Naive thymus-derived CD4-positive, alpha-beta T cell (primary cell): ENCODE measurements at regions of chr11 and their contacts with region 1.

Region 1: GRCh38 chr11:67583247-67584204 is at the start of gene GSTP1:
- DNase-seq: peak; percentile 51 to 86 (median 62)
- ATAC-seq: peak; percentile 86
- H3K4me3 ChIP-seq: peak within 1 kb of the TSS; percentile 69
- H3K4me3 Mint-ChIP-seq: peak within 1 kb of the TSS; percentile 79 to 98 (median 92)
- H3K27ac ChIP-seq: peak within 1 kb of the TSS; percentile 77
- H3K27ac Mint-ChIP-seq: peak within 1 kb of the TSS; percentile 78 to 93 (median 90)
- H3K4me1 ChIP-seq: peaks cover 9 to 18% of the 10 kb centered on the region in 2 donors
- H3K4me1 Mint-ChIP-seq: peaks cover 37 to 55% (median 44%) of the 10 kb centered on the region in 7 donors
- H3K27me3 ChIP-seq: no peaks in the 10 kb centered on the region
- H3K27me3 Mint-ChIP-seq: peaks cover 0 to 27% (median 0%) of the 10 kb centered on the region in 5 donors
- total RNA-seq, gene GSTP1: 77.2 to 265 (median 139) TPM

Region 2: DNA sequence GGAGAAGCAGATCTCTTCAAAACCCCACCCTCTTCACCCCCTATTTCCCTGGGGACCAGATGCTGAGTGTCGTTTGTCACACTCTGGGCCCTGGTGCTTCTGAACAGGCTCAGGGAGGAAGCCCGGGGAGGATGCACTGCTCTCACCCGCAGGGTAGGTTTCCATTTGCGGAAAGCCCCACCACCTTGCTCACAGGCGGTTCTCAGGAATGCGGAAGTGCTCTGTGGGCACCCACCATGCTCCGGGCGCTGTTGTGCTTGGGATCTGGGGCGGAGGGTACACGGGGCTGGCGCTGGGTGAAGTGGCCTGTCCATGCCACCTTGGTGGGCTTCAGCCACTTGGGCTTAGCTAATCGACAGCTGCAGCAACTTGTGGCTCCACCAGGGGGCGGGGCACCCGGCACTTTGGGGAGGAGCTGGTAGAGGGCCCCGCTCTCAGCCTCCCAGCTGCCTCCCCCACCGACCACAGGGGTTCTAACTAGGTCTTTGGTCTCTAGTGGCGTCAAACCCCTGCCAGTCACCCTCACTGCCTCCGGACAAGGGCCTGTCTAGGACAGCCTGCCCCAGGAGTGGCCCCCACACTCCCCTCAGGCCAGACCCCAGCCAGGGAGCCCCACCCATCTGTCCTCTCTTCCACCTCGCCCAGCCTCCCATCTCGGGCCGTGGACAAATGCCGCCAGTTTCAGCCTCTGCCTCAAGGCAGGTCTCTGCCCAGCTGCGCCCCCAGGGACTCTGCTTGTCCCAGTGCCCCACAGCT is 30.6 kb after region 1 on chr11:
- CTCF ChIA-PET with region 1: interaction called, 3 read pairs
- POLR2A ChIA-PET with region 1: interaction called, 16 read pairs
- intact Hi-C with region 1: loop called (anchors 2 kb)
- DNase-seq: peak; percentile 65 to 89 (median 85)
- ATAC-seq: peak; percentile 95
- H3K4me3 ChIP-seq: peak overlapping the region; percentile 60
- H3K4me3 Mint-ChIP-seq: peak overlapping the region; percentile 59 to 87 (median 82)
- H3K27ac ChIP-seq: peak overlapping the region; percentile 96
- H3K27ac Mint-ChIP-seq: peak overlapping the region; percentile 92 to 99 (median 98)
- H3K4me1 ChIP-seq: peaks cover 25 to 26% of the 10 kb centered on the region in 2 donors
- H3K4me1 Mint-ChIP-seq: peaks cover 21 to 50% (median 37%) of the 10 kb centered on the region in 7 donors
- H3K27me3 ChIP-seq: no peaks in the 10 kb centered on the region
- H3K27me3 Mint-ChIP-seq: peaks cover 0 to 9% (median 0%) of the 10 kb centered on the region in 5 donors